Posterior vena cava (tissue), 2 donors: ENCODE measurements at regions of chr5 and their contacts with region 1.

Region 1: DNA sequence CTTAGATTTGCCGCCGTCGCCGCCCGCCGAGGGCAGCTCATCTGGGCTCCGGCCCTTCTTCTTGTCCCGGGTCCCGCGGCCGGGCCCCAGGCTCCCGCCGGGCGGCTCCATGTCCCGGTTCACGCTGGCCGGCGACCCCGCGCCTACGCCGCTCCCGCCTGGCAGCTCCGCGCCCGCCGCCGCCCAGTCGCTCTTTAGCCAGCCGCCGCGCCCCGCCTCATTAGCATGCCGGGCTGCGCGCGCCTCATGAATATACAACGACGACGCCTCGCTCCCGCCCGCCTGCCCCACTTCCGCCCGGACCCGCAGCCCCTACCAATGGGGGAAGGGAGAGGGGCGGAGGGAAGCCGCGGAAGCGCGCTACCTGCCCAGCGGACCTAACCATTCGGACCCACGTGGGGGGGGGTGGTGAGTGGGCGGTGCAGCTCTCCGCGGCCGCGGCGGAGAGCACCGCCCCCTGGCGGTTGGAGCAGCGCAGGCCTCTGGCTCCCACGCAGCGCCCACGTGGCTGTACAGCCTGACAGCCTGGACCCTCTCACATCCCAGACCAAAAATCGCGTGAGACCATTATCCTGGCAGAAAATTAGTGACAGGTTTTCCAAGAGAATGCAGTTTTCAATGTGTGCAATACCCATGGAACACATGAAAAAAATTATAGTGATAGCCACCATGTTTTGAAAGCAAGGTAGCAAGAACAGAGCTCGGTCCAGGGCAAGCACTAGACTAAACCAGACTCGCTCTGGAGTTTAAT is at the start of gene DIAPH1:
- DNase-seq: peak; percentile 99
- total RNA-seq, gene DIAPH1: 52.3 to 83.8 TPM

Region 2: GRCh38 chr5:141598391-141599350 is 20.3 kb before region 1 on chr5:
- intact Hi-C with region 1: loop called in 1 of 2 experiments (anchors 2 kb)
- DNase-seq: no peak

Region 3: DNA sequence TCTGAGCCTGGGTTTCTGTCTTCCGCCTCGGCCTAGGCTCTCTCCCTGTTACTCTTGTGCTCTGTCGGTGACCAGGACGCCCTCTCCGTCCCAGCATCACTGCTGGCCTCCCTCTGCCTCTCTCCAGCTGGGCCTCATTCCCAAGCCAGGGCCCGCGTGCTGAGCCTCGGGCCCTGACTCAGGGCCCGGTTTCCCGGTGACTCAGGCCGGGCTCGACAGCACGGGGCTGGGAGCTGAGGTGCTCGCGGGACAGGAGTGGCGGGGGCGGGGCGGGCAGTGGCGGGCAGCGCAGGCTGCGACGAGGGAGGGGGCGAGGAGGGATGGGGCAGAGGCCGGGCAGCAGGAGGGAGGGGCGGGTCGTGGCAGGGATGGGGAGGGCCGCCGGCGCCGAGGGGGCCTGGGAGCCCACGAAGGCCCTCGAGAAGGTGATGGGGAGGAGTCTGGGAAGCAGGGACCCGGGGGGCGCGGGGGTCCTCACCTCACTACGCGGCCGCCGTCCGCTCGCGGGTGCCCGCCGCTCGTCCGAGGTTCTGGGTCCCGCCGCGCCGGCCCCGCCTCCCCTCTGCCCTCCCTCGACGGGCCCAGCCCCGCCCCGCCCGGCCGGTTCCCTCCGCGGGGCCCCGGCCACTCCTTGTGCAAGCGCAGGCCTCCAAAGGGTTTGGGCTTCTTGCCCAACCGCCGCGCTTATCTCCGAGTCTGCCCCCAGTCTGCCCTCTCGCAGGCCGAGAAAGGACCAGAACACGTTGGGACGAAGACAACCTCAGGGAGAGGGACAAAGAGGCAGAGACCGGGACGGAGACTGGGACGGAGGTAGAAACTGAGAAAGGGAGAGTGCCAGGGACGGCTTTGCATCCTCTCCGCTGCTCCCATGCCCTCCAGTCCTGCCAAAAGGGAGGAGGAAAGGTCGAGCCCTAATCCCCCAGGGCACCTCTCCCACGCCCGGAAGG is 63.0 kb after region 1 on chr5 and contains the start of gene ARAP3:
- intact Hi-C with region 1: no loop called
- DNase-seq: peak; percentile 95
- total RNA-seq, gene ARAP3: 14.7 to 18.8 TPM